ENCODE measurements at regions of chr20 and their contacts with region 1.

Region 1: DNA sequence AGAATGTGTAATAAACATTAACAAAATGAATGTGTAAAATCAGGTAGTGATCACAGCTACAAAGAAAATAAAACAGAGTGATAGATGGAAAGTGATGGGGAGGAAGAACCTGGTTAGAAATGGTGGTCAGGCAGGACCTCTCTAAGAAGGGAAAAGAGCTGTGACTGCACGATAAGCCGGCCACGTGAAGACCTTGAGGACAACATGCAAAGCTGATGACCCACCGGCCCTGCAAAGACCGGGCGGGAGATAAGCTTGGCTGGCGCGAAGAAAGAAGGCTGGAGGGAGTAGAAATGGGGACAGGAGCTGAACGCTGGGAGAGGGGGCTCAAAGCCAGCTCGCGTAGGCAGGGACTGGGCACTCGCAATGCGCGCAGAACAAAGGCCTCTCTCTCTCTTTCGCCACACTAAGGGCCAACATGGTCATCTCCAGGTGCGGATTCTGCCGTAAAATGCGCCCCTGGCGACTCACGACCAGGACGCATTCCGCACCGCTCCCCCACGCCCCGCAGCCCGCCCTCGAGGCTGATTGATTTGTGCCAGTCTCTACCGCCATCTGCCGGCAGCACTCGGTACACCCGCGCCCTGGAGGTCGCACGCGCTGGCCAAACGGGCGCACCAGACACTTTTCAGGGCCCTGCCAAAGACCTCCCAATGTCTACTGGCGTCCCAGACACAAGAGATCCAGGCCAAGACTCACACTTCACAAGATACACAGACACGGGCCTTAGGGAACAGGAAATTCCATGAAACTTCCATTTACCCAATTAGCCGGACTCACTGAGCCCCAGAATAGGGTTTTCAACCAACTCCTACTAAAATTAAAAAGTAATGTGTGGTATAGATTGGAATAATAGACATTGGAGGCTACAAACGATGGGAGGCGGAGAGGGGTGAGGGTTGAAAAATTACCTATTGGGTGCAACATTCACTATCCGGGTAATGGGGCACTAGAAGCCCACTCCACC is 9.4 kb downstream of the DEFB132 start:
- DNase-seq: peak; percentile 58
- H3K4me3 ChIP-seq: peak overlapping the region; percentile 2 to 41 (median 14)
- H3K27ac ChIP-seq: no peak overlapping the region
- H3K4me1 ChIP-seq: no peaks in the 10 kb centered on the region
- H3K27me3 ChIP-seq: peaks cover 3% of the 10 kb centered on the region
- CTCF ChIP-seq: peak; percentile 67 to 91

Region 2: GRCh38 chr20:208942-209566 is 57.8 kb before region 1 on chr20:
- CTCF ChIA-PET with region 1: no interaction called
- dilution Hi-C with region 1: no loop called
- in situ Hi-C with region 1: no loop called
- intact Hi-C with region 1: loop called (anchors 1 kb)
- DNase-seq: peak; percentile 61
- H3K4me3 ChIP-seq: no peak overlapping the region
- H3K27ac ChIP-seq: no peak overlapping the region
- H3K4me1 ChIP-seq: no peaks in the 10 kb centered on the region
- H3K27me3 ChIP-seq: peaks cover 8% of the 10 kb centered on the region
- CTCF ChIP-seq: peak; percentile 70 to 73

Region 3: DNA sequence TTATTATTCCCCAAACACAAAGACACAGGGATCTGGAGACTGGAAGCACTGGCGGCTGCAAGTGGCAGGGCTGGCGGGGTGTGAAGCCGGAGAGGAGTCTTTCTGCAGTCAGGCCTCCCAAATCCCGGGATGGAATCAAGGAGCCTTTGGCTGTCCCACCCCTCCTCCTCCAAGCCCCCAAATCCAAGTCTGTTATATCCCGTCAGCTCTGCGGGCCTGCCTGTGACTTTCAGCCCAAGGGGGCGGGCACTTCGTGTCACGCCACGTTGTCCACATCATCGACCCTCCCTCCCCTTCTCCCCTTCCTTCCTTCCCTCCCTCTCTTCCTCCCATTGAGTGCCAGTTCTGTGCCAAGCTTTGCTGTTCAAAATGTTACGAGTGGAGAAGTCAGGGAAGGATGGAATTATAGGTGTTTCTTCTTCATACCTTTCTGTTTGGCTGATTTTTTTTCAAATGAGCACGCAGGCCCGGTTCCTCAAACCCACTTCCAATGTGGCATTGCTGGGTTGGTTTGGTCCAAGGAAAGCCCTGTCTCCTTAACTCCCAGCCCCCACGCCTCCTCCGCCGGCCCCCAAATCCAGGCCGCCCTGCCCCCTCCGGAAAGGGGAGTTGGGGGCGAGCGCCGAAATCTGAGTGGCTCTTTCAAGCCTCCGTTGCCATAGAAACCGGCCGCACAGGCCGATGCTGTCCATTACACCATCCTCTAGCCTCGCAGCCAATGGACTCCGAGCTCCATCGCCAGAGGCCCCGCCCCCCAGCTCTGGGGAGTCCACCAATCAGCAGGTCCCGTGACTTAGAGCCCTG is 43.2 kb after region 1 on chr20:
- CTCF ChIA-PET with region 1: no interaction called
- dilution Hi-C with region 1: no loop called
- in situ Hi-C with region 1: no loop called
- intact Hi-C with region 1: no loop called
- DNase-seq: peak; percentile 36
- H3K4me3 ChIP-seq: no peak overlapping the region
- H3K27ac ChIP-seq: peak overlapping the region; percentile 17
- H3K4me1 ChIP-seq: peaks cover 23% of the 10 kb centered on the region
- H3K27me3 ChIP-seq: no peaks in the 10 kb centered on the region
- CTCF ChIP-seq: no peak

Region 4: GRCh38 chr20:787825-788224 is 520.9 kb after region 1 on chr20:
- CTCF ChIA-PET with region 1: no interaction called
- dilution Hi-C with region 1: loop called (anchors 10 kb)
- in situ Hi-C with region 1: no loop called
- intact Hi-C with region 1: no loop called
- DNase-seq: no peak
- H3K4me3 ChIP-seq: no peak overlapping the region
- H3K27ac ChIP-seq: no peak overlapping the region
- H3K4me1 ChIP-seq: no peaks in the 10 kb centered on the region
- H3K27me3 ChIP-seq: no peaks in the 10 kb centered on the region
- CTCF ChIP-seq: no peak

Measured in mammary epithelial cell (primary cell).